HCT116 (cell line): ENCODE measurements at regions of chr11 and their contacts with region 1.

Region 1: GRCh38 chr11:78045851-78046485 is 17.7 kb upstream of the THRSP start:
- DNase-seq: peak; percentile 27
- ATAC-seq: peak; percentile 97
- H3K4me3 ChIP-seq: no peak overlapping the region
- H3K27ac ChIP-seq: no peak overlapping the region
- H3K4me1 ChIP-seq: peaks cover 8 to 21% of the 10 kb centered on the region in 2 experiments
- H3K27me3 ChIP-seq: no peaks in the 10 kb centered on the region
- CTCF ChIP-seq: peak; percentile 92 to 99 (median 99)
- POLR2A ChIP-seq: no peak
- RAD21 ChIP-seq: peak; percentile 99

Region 2: DNA sequence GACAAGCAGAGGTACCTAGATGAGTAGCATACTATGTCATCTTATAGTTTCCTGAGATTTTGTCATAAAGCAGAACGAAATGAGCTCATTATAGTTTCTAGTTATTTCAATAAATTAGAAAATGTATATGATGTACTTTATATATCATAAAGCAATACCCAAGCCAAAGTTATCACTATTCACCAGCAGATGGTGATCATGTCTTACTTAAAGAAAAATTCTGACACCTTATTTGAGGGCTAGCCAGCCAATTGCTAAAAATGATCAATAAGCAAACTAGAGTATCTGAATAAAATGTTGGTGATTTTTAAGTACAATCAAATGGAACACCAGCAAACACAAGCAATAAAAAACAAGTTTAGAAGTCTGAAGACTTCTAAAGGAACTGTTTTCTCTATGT is 269.5 kb before region 1 on chr11:
- CTCF ChIA-PET with region 1: interaction called, 5 read pairs
- POLR2A ChIA-PET with region 1: no interaction called
- RAD21 ChIA-PET with region 1: no interaction called
- intact Hi-C with region 1: loop called (anchors 2 kb)
- DNase-seq: peak; percentile 19
- ATAC-seq: no peak
- H3K4me3 ChIP-seq: no peak overlapping the region
- H3K27ac ChIP-seq: no peak overlapping the region
- H3K4me1 ChIP-seq: no peaks in the 10 kb centered on the region
- H3K27me3 ChIP-seq: no peaks in the 10 kb centered on the region
- CTCF ChIP-seq: peak; percentile 32 to 47 (median 34); a peak in 4 of 6 replicates
- POLR2A ChIP-seq: no peak
- RAD21 ChIP-seq: peak; percentile 62

Region 3: GRCh38 chr11:77820563-77821348 is 225.2 kb before region 1 on chr11 and contains the starts of genes AAMDC and RSF1:
- CTCF ChIA-PET with region 1: no interaction called
- POLR2A ChIA-PET with region 1: no interaction called
- RAD21 ChIA-PET with region 1: no interaction called
- intact Hi-C with region 1: loop called (anchors 5 kb)
- DNase-seq: peak; percentile 96
- ATAC-seq: peak; percentile 85
- H3K4me3 ChIP-seq: peak within 1 kb of the TSS; percentile 78 to 91
- H3K27ac ChIP-seq: peak within 1 kb of the TSS; percentile 90
- H3K4me1 ChIP-seq: peaks cover 5 to 13% of the 10 kb centered on the region in 2 experiments; a peak in 3 of 4 replicates
- H3K27me3 ChIP-seq: no peaks in the 10 kb centered on the region
- CTCF ChIP-seq: peak; percentile 47 to 75 (median 61); a peak in 5 of 6 replicates
- POLR2A ChIP-seq: peak; percentile 74
- RAD21 ChIP-seq: peak; percentile 59
- total RNA-seq, gene AAMDC: 11.2 TPM
- total RNA-seq, gene RSF1: 43.1 TPM

Region 4: DNA sequence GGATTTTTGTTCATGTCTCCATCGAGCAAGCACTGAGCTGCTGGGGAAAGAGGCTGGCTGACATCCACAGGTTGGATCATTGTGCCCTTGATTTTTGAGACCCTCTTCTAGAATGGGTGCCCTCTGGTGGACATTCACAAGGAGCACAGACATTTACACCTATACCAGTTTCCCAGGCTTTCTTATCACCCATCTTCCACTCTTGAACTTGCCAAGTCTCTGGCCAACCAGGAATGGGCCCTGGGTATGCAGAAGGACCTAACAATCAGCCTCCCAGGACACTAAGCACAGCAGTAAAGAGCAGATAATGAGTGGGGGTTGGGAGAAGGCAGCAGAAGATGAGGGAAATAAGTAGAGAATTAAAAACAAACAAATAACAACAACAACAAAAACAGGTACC is 45.8 kb before region 1 on chr11:
- CTCF ChIA-PET with region 1: interaction called, 10 read pairs
- POLR2A ChIA-PET with region 1: interaction called, 13 read pairs
- RAD21 ChIA-PET with region 1: no interaction called
- intact Hi-C with region 1: no loop called
- DNase-seq: peak; percentile 68
- ATAC-seq: peak; percentile 95
- H3K4me3 ChIP-seq: no peak overlapping the region
- H3K27ac ChIP-seq: no peak overlapping the region
- H3K4me1 ChIP-seq: peaks cover 7 to 8% of the 10 kb centered on the region in 2 experiments
- H3K27me3 ChIP-seq: no peaks in the 10 kb centered on the region
- CTCF ChIP-seq: peak; percentile 58 to 76 (median 71); a peak in 5 of 6 replicates
- POLR2A ChIP-seq: no peak
- RAD21 ChIP-seq: peak; percentile 67

Region 5: DNA sequence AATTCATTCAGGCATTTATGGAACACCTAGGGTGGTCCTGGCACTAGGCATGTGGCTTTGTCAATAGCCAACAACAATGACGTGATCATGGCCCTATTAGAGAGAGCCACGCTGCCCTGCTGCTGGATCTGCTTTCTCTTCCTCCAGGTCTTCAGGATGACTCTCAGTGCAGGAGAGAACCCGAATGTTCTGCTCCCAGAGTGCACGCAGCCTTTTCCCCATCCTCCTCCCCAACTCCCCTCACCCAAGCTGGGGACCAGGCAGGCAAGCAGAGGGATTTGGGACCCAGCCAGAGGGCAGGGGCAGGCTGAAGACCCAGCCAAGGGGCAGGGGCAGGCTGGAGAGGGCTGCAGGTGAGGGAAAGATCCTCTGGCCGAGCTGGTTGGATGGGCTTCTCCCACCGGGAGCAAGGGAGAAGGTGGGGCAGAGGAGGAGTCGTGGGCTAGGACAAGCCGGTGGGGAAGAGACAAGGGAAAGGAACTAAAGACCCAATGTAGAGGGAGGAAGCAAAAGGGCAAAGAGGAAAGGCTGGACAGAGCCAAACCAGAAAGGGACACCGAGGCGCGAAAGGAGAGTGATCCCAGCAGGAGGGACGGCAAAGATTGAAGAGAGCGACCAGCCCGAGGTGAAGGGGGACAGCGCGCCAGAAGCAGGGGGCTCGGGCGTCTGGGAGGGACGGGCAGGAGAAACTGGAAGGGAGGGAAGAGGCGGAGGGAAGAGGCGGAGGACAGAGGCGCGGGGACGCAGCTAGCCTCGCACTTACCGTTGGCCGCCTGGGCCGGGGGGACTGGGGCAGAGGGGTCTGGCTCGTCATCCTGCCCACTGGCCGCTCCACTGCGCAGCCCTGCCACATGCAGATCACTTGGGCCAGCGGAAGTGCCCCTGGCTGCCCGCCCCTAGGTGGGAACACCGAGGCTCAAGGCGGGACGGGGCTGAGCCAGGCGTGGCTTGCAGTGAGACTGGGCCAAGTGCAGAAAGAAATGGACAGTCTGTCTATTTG is 23.3 kb before region 1 on chr11 and contains the start of gene KCTD14:
- CTCF ChIA-PET with region 1: no interaction called
- POLR2A ChIA-PET with region 1: no interaction called
- RAD21 ChIA-PET with region 1: no interaction called
- intact Hi-C with region 1: no loop called
- DNase-seq: no peak
- ATAC-seq: peak; percentile 94
- H3K4me3 ChIP-seq: peak within 1 kb of the TSS; percentile 74 to 76
- H3K27ac ChIP-seq: peak within 1 kb of the TSS; percentile 54
- H3K4me1 ChIP-seq: peaks cover 20 to 47% of the 10 kb centered on the region in 2 experiments
- H3K27me3 ChIP-seq: no peaks in the 10 kb centered on the region
- CTCF ChIP-seq: no peak
- POLR2A ChIP-seq: peak; percentile 81
- RAD21 ChIP-seq: no peak
- total RNA-seq, gene KCTD14: 15.2 TPM

Region 6: DNA sequence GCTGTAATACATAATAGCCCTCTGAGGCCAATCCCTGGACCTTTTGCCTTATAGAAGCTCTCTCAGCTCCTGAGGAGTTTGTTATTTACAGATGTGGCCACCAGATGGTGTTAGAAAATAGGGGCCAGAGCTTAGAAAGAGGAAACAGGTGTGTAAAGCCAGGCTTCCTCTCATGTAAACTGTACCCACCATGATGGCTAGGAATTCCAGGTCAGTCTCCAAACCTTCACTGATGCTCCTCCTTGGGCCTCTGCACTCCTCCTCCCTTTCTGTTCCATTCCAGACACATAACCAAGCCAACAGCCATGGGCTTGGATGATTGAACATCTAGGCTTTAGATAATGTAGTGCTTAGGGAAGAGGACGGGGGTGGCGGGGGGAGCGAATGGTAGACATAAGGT is 182.5 kb after region 1 on chr11:
- CTCF ChIA-PET with region 1: no interaction called
- POLR2A ChIA-PET with region 1: no interaction called
- RAD21 ChIA-PET with region 1: no interaction called
- intact Hi-C with region 1: no loop called
- DNase-seq: peak; percentile 32
- ATAC-seq: peak; percentile 88
- H3K4me3 ChIP-seq: no peak overlapping the region
- H3K27ac ChIP-seq: no peak overlapping the region
- H3K4me1 ChIP-seq: no peaks in the 10 kb centered on the region
- H3K27me3 ChIP-seq: no peaks in the 10 kb centered on the region
- CTCF ChIP-seq: peak; percentile 45 to 77 (median 47); a peak in 5 of 6 replicates
- POLR2A ChIP-seq: no peak
- RAD21 ChIP-seq: peak; percentile 79